Activated CD4-positive, alpha-beta T cell treated with anti-CD3 and anti-CD28 coated beads, Interleukin-2, amount 10 ng/mL, durations not matched to agents 24 days and 14 days (primary cell): ENCODE measurements at regions of chr15 and their contacts with region 1.

Region 1: GRCh38 chr15:65304389-65305144 is at the start of gene RNU5B-1:
- DNase-seq: peak; percentile 95
- H3K4me3 Mint-ChIP-seq: peak within 1 kb of the TSS; percentile 92
- H3K27ac Mint-ChIP-seq: peak within 1 kb of the TSS; percentile 93
- H3K4me1 Mint-ChIP-seq: peaks cover 23% of the 10 kb centered on the region
- H3K27me3 Mint-ChIP-seq: peaks cover 5% of the 10 kb centered on the region
- total RNA-seq, gene RNU5B-1: not detected in 2 replicates

Region 2: DNA sequence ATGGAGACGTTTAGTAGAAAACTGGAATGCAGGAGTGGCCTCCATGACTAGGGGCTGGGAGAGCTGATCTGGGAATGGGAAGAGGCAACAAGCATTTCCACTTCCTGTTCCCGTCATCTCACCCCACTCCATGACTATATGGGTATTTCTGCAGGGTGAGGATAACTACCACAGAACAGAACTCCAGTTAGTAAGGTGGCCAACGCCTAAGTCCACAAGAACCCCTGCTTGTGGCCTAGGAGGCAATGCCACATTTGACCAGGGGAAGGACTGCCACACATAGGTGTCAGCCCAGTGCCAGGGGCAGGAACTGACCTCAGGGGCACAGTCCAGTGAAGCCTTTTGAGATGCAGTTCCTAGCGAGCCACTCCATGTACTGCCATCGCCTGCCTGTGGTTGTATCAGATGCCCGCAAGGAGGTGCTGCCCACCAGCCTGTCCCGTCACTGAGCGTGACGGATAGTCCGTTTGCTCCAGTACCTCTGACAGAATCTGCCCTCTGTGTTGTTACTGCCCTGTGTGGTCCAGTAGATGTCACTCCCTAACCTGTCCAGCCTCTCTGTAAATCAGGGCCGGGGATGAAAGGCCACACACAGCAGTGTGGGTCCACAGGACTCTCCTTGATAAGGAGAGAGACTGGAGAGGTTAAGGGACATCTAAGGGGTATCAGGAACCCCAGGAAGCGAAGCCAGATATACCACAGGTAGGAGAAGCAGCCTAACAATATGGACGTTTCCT is 271.6 kb before region 1 on chr15:
- intact Hi-C with region 1: loop called (anchors 5 kb)
- DNase-seq: peak; percentile 75
- H3K4me3 Mint-ChIP-seq: no peak overlapping the region
- H3K27ac Mint-ChIP-seq: no peak overlapping the region
- H3K4me1 Mint-ChIP-seq: peaks cover 19% of the 10 kb centered on the region
- H3K27me3 Mint-ChIP-seq: peaks cover 16% of the 10 kb centered on the region

Region 3: GRCh38 chr15:65184868-65185738 is 119.5 kb before region 1 on chr15 and contains the start of gene CLPX:
- intact Hi-C with region 1: loop called (anchors 1 kb)
- DNase-seq: peak; percentile 97
- H3K4me3 Mint-ChIP-seq: peak within 1 kb of the TSS; percentile 94
- H3K27ac Mint-ChIP-seq: peak within 1 kb of the TSS; percentile 91
- H3K4me1 Mint-ChIP-seq: peaks cover 22% of the 10 kb centered on the region
- H3K27me3 Mint-ChIP-seq: peaks cover 1% of the 10 kb centered on the region
- total RNA-seq, gene CLPX: 62.8 and 63.5 TPM in 2 replicates

Region 4: GRCh38 chr15:65264863-65265430 is 39.6 kb before region 1 on chr15:
- intact Hi-C with region 1: no loop called
- DNase-seq: no peak
- H3K4me3 Mint-ChIP-seq: no peak overlapping the region
- H3K27ac Mint-ChIP-seq: no peak overlapping the region
- H3K4me1 Mint-ChIP-seq: no peaks in the 10 kb centered on the region
- H3K27me3 Mint-ChIP-seq: no peaks in the 10 kb centered on the region

Region 5: GRCh38 chr15:65292938-65293518 is 11.5 kb before region 1 on chr15:
- intact Hi-C with region 1: loop called (anchors 1 kb)
- DNase-seq: no peak
- H3K4me3 Mint-ChIP-seq: no peak overlapping the region
- H3K27ac Mint-ChIP-seq: no peak overlapping the region
- H3K4me1 Mint-ChIP-seq: peaks cover 26% of the 10 kb centered on the region
- H3K27me3 Mint-ChIP-seq: no peaks in the 10 kb centered on the region